WTC11 (cell line): ENCODE measurements at regions of chr20 and their contacts with region 1.

Region 1: GRCh38 chr20:18712882-18713281 is 100.7 kb upstream of the SCP2D1 start:
- DNase-seq: peak; percentile 69
- ATAC-seq: peak; percentile 95
- H3K4me3 Mint-ChIP-seq: no peak overlapping the region
- H3K27ac Mint-ChIP-seq: 0 out of 2 replicates have a peak overlapping the region, but pooled peaks have one; percentile 82
- H3K4me1 Mint-ChIP-seq: peaks cover 28% of the 10 kb centered on the region
- H3K27me3 Mint-ChIP-seq: no peaks in the 10 kb centered on the region
- CTCF ChIP-seq: no peak

Region 2: GRCh38 chr20:18904624-18905023 is 191.7 kb after region 1 on chr20:
- CTCF ChIA-PET with region 1: interaction called, 10 read pairs
- POLR2A ChIA-PET with region 1: no interaction called
- DNase-seq: peak; percentile 13
- ATAC-seq: peak; percentile 62; the same call in 1 of the 2 replicates
- H3K4me3 Mint-ChIP-seq: no peak overlapping the region
- H3K27ac Mint-ChIP-seq: no peak overlapping the region
- H3K4me1 Mint-ChIP-seq: peaks cover 37% of the 10 kb centered on the region
- H3K27me3 Mint-ChIP-seq: no peaks in the 10 kb centered on the region; the same call in 1 of the 2 replicates
- CTCF ChIP-seq: no peak

Region 3: DNA sequence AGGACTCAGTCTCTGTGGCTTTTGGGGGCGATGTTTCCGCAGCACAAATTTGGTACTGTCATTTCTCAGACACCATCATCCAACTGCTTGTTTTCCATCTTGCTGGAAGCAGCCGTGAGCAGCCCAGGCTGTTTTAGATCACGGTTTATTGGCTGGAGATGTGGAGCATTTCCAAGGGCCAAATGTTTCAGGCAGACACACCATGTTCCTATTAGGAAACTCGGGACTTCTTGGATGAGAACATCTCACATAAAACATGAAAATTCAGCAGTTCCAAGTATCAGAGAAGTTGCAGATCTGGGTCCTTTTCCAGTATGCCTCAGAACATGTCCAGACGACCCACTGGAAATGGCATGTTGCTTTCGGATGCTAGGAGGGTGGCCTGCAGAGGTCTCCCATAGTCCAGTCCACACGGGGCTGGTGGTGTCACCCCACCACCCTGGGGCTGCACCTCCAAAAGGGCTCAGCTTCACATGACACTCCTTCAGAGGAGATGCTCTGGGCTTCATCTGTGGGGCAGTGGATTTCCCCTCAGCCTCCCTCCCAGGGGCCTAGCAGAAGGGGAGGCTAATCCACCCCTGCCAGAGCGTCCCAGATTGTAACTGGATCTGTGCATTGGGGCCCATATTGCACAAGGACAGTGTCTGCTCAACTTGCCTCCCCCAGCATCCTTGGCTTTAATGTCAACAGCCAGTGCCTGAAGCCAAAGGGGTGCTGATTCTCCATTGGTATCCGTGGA is 277.0 kb after region 1 on chr20:
- CTCF ChIA-PET with region 1: no interaction called
- POLR2A ChIA-PET with region 1: no interaction called
- DNase-seq: no peak
- ATAC-seq: no peak
- H3K4me3 Mint-ChIP-seq: no peak overlapping the region
- H3K27ac Mint-ChIP-seq: no peak overlapping the region
- H3K4me1 Mint-ChIP-seq: peaks cover 8% of the 10 kb centered on the region
- H3K27me3 Mint-ChIP-seq: no peaks in the 10 kb centered on the region
- CTCF ChIP-seq: no peak

Region 4: GRCh38 chr20:19947611-19948264 is 1234.9 kb after region 1 on chr20:
- CTCF ChIA-PET with region 1: no interaction called
- POLR2A ChIA-PET with region 1: no interaction called
- DNase-seq: peak; percentile 47
- ATAC-seq: peak; percentile 93
- H3K4me3 Mint-ChIP-seq: no peak overlapping the region
- H3K27ac Mint-ChIP-seq: peak overlapping the region; percentile 53; the same call in 1 of the 2 replicates
- H3K4me1 Mint-ChIP-seq: peaks cover 11% of the 10 kb centered on the region
- H3K27me3 Mint-ChIP-seq: no peaks in the 10 kb centered on the region
- CTCF ChIP-seq: no peak